Activated naive CD4-positive, alpha-beta T cell treated with anti-CD3 and anti-CD28 coated beads for 36 hours (primary cell): ENCODE measurements at regions of chr5 and their contacts with region 1.

Region 1: DNA sequence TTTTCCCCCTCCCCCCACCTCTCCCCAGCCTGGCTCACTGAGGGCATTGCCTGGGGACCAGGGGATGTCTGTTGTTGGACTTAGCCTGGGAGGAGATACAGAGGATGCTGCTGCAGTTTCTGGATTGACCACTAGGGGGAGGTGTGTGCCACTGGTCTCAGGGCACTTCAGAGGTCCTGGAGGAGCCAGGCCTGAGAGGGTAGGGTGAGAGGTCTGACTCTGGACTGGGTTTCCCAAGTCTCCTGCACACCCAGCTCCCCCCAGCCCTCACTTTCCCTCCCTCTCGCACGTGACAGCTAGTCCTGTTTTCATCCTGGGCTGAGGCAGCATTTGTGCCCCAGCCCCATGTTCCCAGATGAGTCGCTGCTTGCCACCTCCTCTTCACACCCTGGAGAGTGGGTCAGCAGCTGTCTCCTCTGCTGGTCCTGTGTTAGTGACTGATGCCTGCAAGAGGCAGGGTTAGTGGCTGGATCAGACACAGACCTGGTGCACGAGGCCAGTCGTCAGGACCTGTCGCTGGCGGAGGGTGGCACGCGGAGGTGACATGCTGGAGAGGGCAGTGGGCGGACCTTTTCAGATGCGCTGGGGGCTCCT is 4.4 kb downstream of the IL3 start:
- DNase-seq: peak; percentile 91
- H3K4me3 Mint-ChIP-seq: no peak overlapping the region
- H3K27ac Mint-ChIP-seq: no peak overlapping the region
- H3K4me1 Mint-ChIP-seq: peaks cover 13% of the 10 kb centered on the region
- H3K27me3 Mint-ChIP-seq: no peaks in the 10 kb centered on the region

Region 2: DNA sequence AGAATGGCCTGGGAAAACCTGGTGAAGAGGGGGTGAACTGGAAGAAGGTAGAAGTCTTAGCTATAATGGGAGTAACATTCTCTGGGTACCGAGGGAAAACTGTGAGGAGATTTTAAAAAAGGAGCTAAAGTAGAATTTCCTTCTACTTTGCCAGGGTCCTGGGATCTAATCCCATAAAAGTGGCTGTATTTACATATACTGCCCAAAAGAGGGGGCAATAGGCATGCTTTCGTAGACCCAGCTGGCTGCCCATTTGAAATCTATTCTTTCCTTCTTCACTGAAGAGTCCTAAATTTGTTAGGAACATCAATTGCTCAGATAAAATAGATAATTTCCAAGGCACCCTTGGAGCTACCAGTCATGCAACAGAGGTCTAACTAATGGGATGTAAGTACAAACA is 641.8 kb before region 1 on chr5:
- CTCF ChIA-PET with region 1: interaction called, 3 read pairs
- intact Hi-C with region 1: loop called (anchors 1 kb)
- DNase-seq: no peak
- H3K4me3 Mint-ChIP-seq: no peak overlapping the region
- H3K27ac Mint-ChIP-seq: peak overlapping the region; percentile 48
- H3K4me1 Mint-ChIP-seq: peaks cover 12% of the 10 kb centered on the region
- H3K27me3 Mint-ChIP-seq: no peaks in the 10 kb centered on the region

Region 3: GRCh38 chr5:132007399-132008165 is 57.3 kb before region 1 on chr5:
- CTCF ChIA-PET with region 1: interaction called, 20 read pairs
- intact Hi-C with region 1: loop called (anchors 1 kb)
- DNase-seq: peak; percentile 93
- H3K4me3 Mint-ChIP-seq: no peak overlapping the region
- H3K27ac Mint-ChIP-seq: no peak overlapping the region
- H3K4me1 Mint-ChIP-seq: peaks cover 17% of the 10 kb centered on the region
- H3K27me3 Mint-ChIP-seq: peaks cover 19% of the 10 kb centered on the region

Region 4: GRCh38 chr5:132180134-132180745 is 115.4 kb after region 1 on chr5:
- CTCF ChIA-PET with region 1: interaction called, 30 read pairs
- intact Hi-C with region 1: loop called (anchors 1 kb)
- DNase-seq: peak; percentile 27
- H3K4me3 Mint-ChIP-seq: no peak overlapping the region
- H3K27ac Mint-ChIP-seq: no peak overlapping the region
- H3K4me1 Mint-ChIP-seq: peaks cover 24% of the 10 kb centered on the region
- H3K27me3 Mint-ChIP-seq: no peaks in the 10 kb centered on the region

Region 5: GRCh38 chr5:132272311-132273210 is 207.7 kb after region 1 on chr5:
- CTCF ChIA-PET with region 1: interaction called, 4 read pairs
- intact Hi-C with region 1: loop called (anchors 2 kb)
- DNase-seq: peak; percentile 82
- H3K4me3 Mint-ChIP-seq: no peak overlapping the region
- H3K27ac Mint-ChIP-seq: no peak overlapping the region
- H3K4me1 Mint-ChIP-seq: peaks cover 12% of the 10 kb centered on the region
- H3K27me3 Mint-ChIP-seq: peaks cover 20% of the 10 kb centered on the region

Region 6: DNA sequence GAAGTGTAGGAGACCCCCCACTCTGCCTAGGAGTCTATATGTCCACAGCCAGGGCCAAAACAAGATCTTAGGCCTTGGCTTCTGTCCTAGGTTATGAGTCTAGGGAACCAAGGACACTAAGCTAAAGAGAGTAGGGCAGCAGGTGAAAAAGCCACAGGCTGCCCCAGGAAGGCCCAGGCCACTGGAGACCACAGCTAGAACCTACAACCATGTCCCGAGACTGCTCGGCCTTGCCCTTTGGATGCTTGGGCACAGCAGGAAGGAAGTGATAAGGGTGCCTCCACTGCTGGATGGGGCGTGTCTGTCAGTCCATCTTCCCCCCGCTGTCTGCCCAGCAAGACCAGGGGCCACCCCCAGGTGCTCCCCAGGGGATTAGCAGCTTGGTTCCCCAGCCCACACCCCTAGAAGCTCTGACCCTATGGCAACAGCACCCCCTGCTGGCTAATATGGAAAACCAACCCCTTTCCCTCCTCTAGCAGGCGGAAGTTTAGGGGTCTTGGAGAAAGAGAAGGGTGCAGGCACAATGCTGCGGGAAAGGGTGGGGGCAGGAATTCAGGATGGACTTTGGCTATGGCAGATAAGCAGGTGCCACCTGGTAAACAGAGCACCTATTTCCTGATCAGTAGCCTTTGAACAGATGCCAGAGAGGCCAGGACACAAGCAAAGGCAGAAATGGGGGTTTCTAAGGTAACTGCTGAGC is 436.2 kb after region 1 on chr5:
- CTCF ChIA-PET with region 1: interaction called, 6 read pairs
- intact Hi-C with region 1: loop called (anchors 1 kb)
- DNase-seq: peak; percentile 86
- H3K4me3 Mint-ChIP-seq: no peak overlapping the region
- H3K27ac Mint-ChIP-seq: no peak overlapping the region
- H3K4me1 Mint-ChIP-seq: peaks cover 19% of the 10 kb centered on the region
- H3K27me3 Mint-ChIP-seq: no peaks in the 10 kb centered on the region

Region 7: DNA sequence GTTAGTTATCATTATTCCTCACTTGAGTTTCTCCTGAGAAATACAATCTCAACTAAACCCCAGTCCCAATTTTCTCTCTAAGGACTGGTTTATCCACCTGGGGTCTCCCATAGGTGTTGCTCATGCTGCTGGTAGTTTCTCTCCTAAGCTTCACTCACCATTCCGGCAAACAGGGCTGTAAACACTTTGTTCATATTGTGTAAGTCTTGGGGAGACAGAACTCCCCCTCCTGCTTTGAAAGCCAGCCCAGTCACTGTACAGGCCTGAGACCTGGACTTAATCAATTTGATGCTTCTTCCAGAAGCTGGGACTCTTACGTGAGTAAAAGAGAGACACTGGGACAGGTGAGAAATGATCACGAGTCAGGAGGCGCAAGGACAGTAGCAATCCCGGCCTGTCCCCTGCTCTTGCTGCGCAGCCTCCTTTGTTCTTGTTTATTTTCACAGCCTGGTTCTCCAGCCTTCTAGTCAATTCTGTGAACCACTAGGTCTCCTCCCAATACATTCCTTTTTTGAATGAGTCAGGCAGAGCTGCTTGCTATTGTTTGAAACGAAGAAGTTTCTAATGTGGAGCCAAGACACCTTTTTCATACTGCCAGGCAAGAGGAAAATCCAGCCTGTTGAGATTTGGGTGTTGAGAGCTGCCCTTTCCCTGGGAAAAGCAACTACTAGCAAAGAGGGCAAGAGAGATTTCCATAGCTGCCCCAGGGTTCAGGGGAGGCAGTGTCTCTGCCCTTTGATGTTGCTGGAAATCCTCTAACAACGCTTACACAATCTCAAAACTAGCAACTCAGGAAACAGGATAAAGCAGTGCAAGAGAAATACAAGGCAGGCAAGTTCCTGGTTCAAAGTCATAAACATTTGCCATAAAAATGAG is 774.8 kb after region 1 on chr5:
- CTCF ChIA-PET with region 1: no interaction called
- intact Hi-C with region 1: no loop called
- DNase-seq: no peak
- H3K4me3 Mint-ChIP-seq: no peak overlapping the region
- H3K27ac Mint-ChIP-seq: no peak overlapping the region
- H3K4me1 Mint-ChIP-seq: no peaks in the 10 kb centered on the region
- H3K27me3 Mint-ChIP-seq: no peaks in the 10 kb centered on the region